PC-3 (cell line): ENCODE measurements at regions of chr20 and their contacts with region 1.

Region 1: GRCh38 chr20:20343932-20344331 is 24.0 kb upstream of the INSM1 start:
- DNase-seq: no peak
- ATAC-seq: no peak
- H3K4me3 ChIP-seq: no peak overlapping the region
- H3K27ac ChIP-seq: no peak overlapping the region
- H3K4me1 ChIP-seq: no peaks in the 10 kb centered on the region
- H3K27me3 ChIP-seq: peaks cover 44% of the 10 kb centered on the region
- CTCF ChIP-seq: no peak

Region 2: DNA sequence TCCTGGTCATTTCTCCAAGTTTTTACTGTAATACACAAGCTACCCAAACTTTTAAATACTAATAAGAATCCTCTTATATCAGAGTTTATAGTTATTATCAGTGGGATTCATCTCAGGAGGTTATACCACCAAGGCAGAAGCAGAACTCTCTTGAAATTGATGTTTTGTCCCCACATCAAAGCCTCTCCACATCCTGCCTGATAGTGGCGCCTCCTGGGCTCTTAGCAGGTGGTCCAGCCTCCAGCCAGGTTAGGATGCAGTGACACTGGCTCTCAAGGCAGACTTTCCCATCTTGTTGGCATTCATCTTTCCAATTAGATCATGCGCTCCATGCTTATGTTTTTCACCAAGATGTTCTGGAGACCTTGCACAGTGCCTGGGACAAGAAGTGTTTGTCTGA is 57.9 kb before region 1 on chr20:
- CTCF ChIA-PET with region 1: no interaction called
- POLR2A ChIA-PET with region 1: no interaction called
- intact Hi-C with region 1: loop called (anchors 10 kb)
- DNase-seq: no peak
- ATAC-seq: no peak
- H3K4me3 ChIP-seq: no peak overlapping the region
- H3K27ac ChIP-seq: no peak overlapping the region
- H3K4me1 ChIP-seq: no peaks in the 10 kb centered on the region
- H3K27me3 ChIP-seq: peaks cover 35% of the 10 kb centered on the region
- CTCF ChIP-seq: no peak

Region 3: DNA sequence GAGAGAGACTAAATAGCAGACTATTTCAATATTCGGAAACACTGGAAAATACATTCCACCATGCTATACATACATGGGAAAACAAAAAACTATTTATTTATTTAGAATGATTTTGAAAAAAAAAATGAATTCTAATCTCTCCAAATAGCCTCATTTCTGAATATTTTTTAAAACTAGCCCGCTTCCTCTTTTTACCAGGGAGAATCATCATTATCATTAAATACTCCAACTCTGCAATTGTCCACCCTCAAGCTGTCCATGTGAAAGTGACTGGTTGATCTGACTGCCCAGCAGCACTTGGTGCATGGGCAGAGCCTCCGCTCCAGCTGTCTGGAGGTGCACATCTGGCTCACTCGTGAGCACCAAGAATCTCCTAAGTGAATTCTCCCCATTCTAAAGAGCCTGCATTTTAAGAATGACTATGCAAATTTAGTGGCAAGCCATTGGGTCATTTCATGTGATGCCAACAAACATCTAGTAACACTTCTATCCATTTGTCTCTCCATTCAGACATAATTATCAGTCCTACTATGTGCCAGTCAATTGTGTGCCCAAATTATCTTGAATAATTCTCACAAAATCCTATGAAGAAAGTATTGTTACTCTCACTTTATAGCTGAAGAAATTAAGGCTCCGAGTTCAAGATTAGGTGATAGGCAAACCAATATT is 88.8 kb after region 1 on chr20:
- CTCF ChIA-PET with region 1: interaction called, 11 read pairs
- POLR2A ChIA-PET with region 1: no interaction called
- intact Hi-C with region 1: no loop called
- DNase-seq: no peak
- ATAC-seq: no peak
- H3K4me3 ChIP-seq: no peak overlapping the region
- H3K27ac ChIP-seq: no peak overlapping the region
- H3K4me1 ChIP-seq: no peaks in the 10 kb centered on the region
- H3K27me3 ChIP-seq: no peaks in the 10 kb centered on the region
- CTCF ChIP-seq: no peak

Region 4: GRCh38 chr20:20993372-20993771 is 649.4 kb after region 1 on chr20:
- CTCF ChIA-PET with region 1: no interaction called
- POLR2A ChIA-PET with region 1: no interaction called
- intact Hi-C with region 1: no loop called
- DNase-seq: no peak
- ATAC-seq: no peak
- H3K4me3 ChIP-seq: no peak overlapping the region
- H3K27ac ChIP-seq: no peak overlapping the region
- H3K4me1 ChIP-seq: no peaks in the 10 kb centered on the region
- H3K27me3 ChIP-seq: peaks cover 91% of the 10 kb centered on the region
- CTCF ChIP-seq: no peak